OCI-LY7 (cell line): ENCODE measurements at regions of chr1 and their contacts with region 1.

Region 1: DNA sequence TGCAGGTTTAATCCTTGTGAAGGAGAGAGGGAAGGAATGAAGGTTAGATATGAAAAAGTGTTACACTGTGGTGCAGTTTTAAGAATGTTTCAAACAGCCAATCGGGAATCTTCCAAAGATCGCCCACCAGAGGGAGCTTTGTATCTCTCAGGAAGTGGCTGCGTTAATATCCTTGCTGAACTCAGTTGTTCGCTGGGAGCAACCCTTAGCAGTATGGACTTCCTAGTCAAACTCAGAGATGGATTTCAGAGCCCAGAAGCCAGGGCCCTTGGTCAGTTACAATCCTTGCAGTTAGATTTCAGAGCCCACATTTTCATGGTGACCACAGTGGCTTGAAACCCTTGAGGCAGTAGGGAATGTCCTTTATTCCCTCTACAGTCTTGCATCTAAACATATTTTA is 136.2 kb downstream of the NTNG1 start:
- DNase-seq: peak; percentile 83
- H3K4me3 ChIP-seq: no peak overlapping the region
- H3K27ac ChIP-seq: no peak overlapping the region
- H3K4me1 ChIP-seq: peaks cover 19% of the 10 kb centered on the region
- CTCF ChIP-seq: peak; percentile 92

Region 2: GRCh38 chr1:107450899-107451664 is 174.1 kb after region 1 on chr1:
- CTCF ChIA-PET with region 1: no interaction called
- POLR2A ChIA-PET with region 1: no interaction called
- intact Hi-C with region 1: loop called (anchors 10 kb)
- DNase-seq: peak; percentile 39
- H3K4me3 ChIP-seq: peak overlapping the region; percentile 12
- H3K27ac ChIP-seq: peak overlapping the region; percentile 27
- H3K4me1 ChIP-seq: peaks cover 28% of the 10 kb centered on the region
- CTCF ChIP-seq: no peak

Region 3: GRCh38 chr1:107529502-107530149 is 252.6 kb after region 1 on chr1:
- CTCF ChIA-PET with region 1: interaction called, 8 read pairs
- POLR2A ChIA-PET with region 1: interaction called, 8 read pairs
- intact Hi-C with region 1: loop called (anchors 1 kb)
- DNase-seq: peak; percentile 74
- H3K4me3 ChIP-seq: no peak overlapping the region
- H3K27ac ChIP-seq: no peak overlapping the region
- H3K4me1 ChIP-seq: peaks cover 4% of the 10 kb centered on the region
- CTCF ChIP-seq: peak; percentile 97

Region 4: DNA sequence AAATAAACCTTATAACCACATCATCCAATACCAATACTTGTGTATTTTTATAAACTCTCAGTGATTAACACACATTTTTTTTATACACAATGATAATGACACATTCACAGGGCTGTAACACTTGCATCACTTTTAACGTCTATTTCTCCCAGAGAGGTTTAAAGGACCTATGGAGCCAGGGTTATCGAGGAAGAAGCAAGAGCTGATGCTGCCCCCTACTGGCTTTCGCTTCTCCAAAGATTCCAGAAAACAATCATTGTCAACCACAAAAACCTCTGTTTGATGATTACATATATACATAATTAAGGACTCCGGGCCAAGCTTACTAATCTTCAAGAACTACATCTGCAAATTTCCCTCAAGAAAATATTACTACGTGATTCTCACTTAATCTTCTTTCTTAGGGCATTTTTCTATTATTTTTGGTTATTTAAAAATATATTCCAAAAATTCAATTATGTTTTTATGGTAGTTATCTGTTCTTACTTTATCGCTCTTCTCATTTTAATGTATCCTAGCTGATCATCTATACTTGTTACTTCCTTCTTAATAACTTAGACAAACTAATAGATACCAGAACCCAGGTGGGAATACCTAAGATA is 473.4 kb after region 1 on chr1:
- CTCF ChIA-PET with region 1: no interaction called
- POLR2A ChIA-PET with region 1: no interaction called
- intact Hi-C with region 1: loop called (anchors 2 kb)
- DNase-seq: peak; percentile 78
- H3K4me3 ChIP-seq: no peak overlapping the region
- H3K27ac ChIP-seq: no peak overlapping the region
- H3K4me1 ChIP-seq: peaks cover 7% of the 10 kb centered on the region
- CTCF ChIP-seq: peak; percentile 94